Prostate gland (tissue), 2 donors: ENCODE measurements at regions of chr9 and their contacts with region 1.

Region 1: GRCh38 chr9:34984049-34984448 is 5.5 kb upstream of the DNAJB5 start:
- DNase-seq: no peak
- H3K4me3 ChIP-seq: no peak overlapping the region
- H3K27ac ChIP-seq: no peak overlapping the region
- H3K4me1 ChIP-seq: no peaks in the 10 kb centered on the region
- H3K27me3 ChIP-seq: no peaks in the 10 kb centered on the region
- CTCF ChIP-seq: no peak
- POLR2A ChIP-seq: no peak

Region 2: GRCh38 chr9:34825775-34826174 is 158.3 kb before region 1 on chr9:
- intact Hi-C with region 1: no loop called
- DNase-seq: no peak
- H3K4me3 ChIP-seq: no peak overlapping the region
- H3K27ac ChIP-seq: no peak overlapping the region
- H3K4me1 ChIP-seq: no peaks in the 10 kb centered on the region
- H3K27me3 ChIP-seq: no peaks in the 10 kb centered on the region
- CTCF ChIP-seq: no peak
- POLR2A ChIP-seq: no peak

Region 3: GRCh38 chr9:34884732-34885131 is 99.3 kb before region 1 on chr9:
- intact Hi-C with region 1: no loop called
- DNase-seq: no peak
- H3K4me3 ChIP-seq: no peak overlapping the region
- H3K27ac ChIP-seq: no peak overlapping the region
- H3K4me1 ChIP-seq: no peaks in the 10 kb centered on the region
- H3K27me3 ChIP-seq: no peaks in the 10 kb centered on the region
- CTCF ChIP-seq: no peak
- POLR2A ChIP-seq: no peak

Region 4: GRCh38 chr9:34907044-34907443 is 77.0 kb before region 1 on chr9:
- intact Hi-C with region 1: loop called (anchors 5 kb)
- DNase-seq: no peak
- H3K4me3 ChIP-seq: no peak overlapping the region
- H3K27ac ChIP-seq: no peak overlapping the region
- H3K4me1 ChIP-seq: no peaks in the 10 kb centered on the region
- H3K27me3 ChIP-seq: no peaks in the 10 kb centered on the region
- CTCF ChIP-seq: no peak
- POLR2A ChIP-seq: no peak